ENCODE measurements at regions of chr14 and their contacts with region 1.

Region 1: GRCh38 chr14:100890061-100890850 is 13.3 kb downstream of the RTL1 start:
- DNase-seq: no peak
- H3K4me3 ChIP-seq: no peak overlapping the region
- H3K27ac ChIP-seq: peak overlapping the region; percentile 87
- H3K4me1 ChIP-seq: peaks cover 49% of the 10 kb centered on the region
- H3K27me3 ChIP-seq: no peaks in the 10 kb centered on the region
- CTCF ChIP-seq: no peak

Region 2: DNA sequence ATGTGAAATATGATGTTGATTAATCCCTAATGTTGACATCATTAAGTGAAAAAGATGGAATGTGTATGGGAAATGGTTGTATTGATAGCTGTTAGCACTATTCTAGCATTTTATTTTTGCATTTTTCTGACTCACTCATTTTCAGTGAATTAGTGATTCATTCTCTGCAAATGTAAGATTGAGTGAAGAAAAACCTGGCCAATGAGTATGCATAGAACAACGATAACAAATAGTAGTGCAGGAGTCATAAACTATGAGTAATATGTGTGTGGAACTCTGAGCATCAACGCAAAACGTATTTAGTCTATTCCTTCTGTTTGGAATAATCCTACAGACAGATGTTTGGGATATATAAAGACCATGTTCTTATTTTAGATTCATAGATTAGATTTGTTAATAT is 89.5 kb after region 1 on chr14:
- CTCF ChIA-PET with region 1: no interaction called
- POLR2A ChIA-PET with region 1: no interaction called
- intact Hi-C with region 1: no loop called
- DNase-seq: no peak
- H3K4me3 ChIP-seq: no peak overlapping the region
- H3K27ac ChIP-seq: no peak overlapping the region
- H3K4me1 ChIP-seq: no peaks in the 10 kb centered on the region
- H3K27me3 ChIP-seq: no peaks in the 10 kb centered on the region
- CTCF ChIP-seq: no peak

Region 3: GRCh38 chr14:101511620-101512375 is 621.5 kb after region 1 on chr14:
- CTCF ChIA-PET with region 1: no interaction called
- POLR2A ChIA-PET with region 1: interaction called, 18 read pairs
- intact Hi-C with region 1: no loop called
- DNase-seq: no peak
- H3K4me3 ChIP-seq: no peak overlapping the region
- H3K27ac ChIP-seq: no peak overlapping the region
- H3K4me1 ChIP-seq: no peaks in the 10 kb centered on the region
- H3K27me3 ChIP-seq: no peaks in the 10 kb centered on the region
- CTCF ChIP-seq: no peak

Measured in A673 (cell line).